Activated T-helper 1 cell treated with anti-CD3 and anti-CD28 coated beads, Interleukin-12 subunit alpha, Interleukin-12 subunit beta, Interleukin-2, Interleukin-4 antibody, amounts not matched to agents 30 ng/mL and 10 ng/mL and 1 ng/mL, durations not matched to agents 14 hours and 24 hours and 36 hours (primary cell): ENCODE measurements at regions of chr7 and their contacts with region 1.

Region 1: GRCh38 chr7:137934941-137935883 is 66.7 kb downstream of the CREB3L2 start:
- DNase-seq: no peak
- H3K4me3 Mint-ChIP-seq: peak overlapping the region; percentile 81
- H3K27ac Mint-ChIP-seq: peak overlapping the region; percentile 89
- H3K4me1 Mint-ChIP-seq: peaks cover 40% of the 10 kb centered on the region
- H3K27me3 Mint-ChIP-seq: no peaks in the 10 kb centered on the region

Region 2: DNA sequence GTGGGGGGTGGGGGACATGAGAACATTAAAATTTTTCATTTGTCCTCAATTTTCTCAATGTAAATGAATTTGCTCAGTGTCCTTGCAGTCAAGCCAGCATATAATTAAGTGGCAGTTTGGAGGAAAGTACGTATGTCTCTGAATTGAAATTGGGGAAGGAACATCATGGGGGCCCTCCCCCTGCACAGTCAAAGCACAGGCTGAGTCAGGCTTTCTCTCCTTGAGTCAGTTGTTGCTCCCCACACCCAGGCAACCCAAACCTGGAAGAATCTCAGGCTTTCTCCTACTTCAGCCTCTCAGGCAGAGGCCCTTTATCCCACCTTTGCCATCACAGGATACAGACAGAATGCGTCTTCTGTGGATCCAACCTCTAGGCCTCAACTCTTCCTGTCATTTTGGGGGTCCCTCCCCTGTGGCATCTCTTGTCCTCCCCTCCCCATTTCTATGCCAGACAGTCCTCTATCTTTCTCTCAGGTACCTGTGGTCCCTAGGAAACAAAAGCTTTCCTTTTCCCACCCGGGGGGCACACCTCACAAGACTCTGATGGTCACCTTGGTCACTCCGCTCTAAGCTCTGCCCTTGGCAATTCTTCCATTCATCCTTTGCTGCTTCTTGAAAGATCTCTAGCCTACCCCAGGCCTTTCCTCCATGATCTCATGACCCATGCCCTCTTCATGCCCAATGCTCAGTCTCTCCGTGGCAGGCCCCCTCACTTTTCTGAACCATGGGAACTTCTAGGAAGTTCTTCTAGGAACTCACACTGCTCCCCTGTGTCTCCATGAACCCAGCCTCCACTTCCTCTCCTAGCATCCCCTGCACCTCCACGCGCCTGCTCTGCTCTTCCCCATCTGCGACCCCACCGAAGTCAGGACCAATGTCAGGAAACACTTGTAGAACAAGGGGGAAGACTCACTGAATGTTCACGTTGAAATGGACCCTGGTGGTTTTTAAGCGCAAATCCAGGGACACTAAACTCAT is 26.3 kb after region 1 on chr7:
- intact Hi-C with region 1: loop called (anchors 1 kb)
- DNase-seq: no peak
- H3K4me3 Mint-ChIP-seq: no peak overlapping the region
- H3K27ac Mint-ChIP-seq: peak overlapping the region; percentile 5
- H3K4me1 Mint-ChIP-seq: peaks cover 42% of the 10 kb centered on the region
- H3K27me3 Mint-ChIP-seq: no peaks in the 10 kb centered on the region

Region 3: DNA sequence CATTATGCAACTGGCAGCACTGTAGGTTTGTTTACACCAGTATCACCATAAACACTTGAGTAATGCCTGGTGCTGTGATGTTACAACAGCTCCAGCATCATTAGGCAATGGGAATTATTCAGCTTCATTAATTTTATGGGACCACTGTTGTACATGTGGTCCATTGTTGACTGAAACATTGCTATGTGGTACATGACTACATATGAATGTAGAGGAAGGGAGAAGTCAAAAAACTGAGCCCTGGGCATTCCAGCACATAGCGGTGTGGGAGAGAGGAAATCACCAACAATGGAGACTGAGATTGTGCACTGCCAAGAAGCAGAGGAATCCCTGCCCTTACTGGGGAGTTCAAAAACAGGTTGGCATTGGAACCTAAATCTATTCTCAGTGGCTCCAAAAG is 613.9 kb after region 1 on chr7:
- intact Hi-C with region 1: no loop called
- DNase-seq: no peak
- H3K4me3 Mint-ChIP-seq: no peak overlapping the region
- H3K27ac Mint-ChIP-seq: no peak overlapping the region
- H3K4me1 Mint-ChIP-seq: peaks cover 10% of the 10 kb centered on the region
- H3K27me3 Mint-ChIP-seq: no peaks in the 10 kb centered on the region

Region 4: GRCh38 chr7:138608275-138608674 is 673.1 kb after region 1 on chr7:
- intact Hi-C with region 1: no loop called
- DNase-seq: no peak
- H3K4me3 Mint-ChIP-seq: no peak overlapping the region
- H3K27ac Mint-ChIP-seq: no peak overlapping the region
- H3K4me1 Mint-ChIP-seq: peaks cover 17% of the 10 kb centered on the region
- H3K27me3 Mint-ChIP-seq: no peaks in the 10 kb centered on the region

Region 5: DNA sequence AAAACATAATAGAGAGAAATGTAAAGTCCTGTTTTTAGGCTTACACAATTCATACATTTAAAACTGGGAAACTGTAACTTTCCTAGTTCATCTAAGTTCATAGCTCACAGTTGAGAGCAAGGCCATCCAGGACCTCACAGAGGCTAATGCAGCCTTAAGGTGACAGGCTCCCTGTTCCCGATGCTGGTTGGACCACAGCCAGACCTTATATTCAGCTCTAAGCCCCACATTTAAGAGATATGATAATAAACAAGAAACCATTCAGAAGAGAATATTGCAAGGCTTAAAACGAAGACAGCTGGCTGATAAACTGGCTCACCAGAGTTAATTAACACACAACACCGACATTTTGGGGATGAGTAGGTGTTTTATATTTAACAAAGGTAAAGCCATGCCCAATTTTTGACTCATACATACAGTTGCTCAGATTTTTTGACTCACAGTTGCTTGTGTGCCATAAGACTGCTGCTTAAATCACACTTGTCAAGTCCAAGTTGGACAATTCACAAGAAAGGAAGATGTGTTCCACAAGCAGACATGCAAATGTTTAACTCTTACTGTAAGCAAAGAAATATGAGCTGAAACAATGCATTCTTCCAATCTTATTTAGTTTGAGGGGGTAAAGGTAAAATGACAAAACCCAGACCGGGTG is 821.5 kb after region 1 on chr7:
- intact Hi-C with region 1: no loop called
- DNase-seq: no peak
- H3K4me3 Mint-ChIP-seq: no peak overlapping the region
- H3K27ac Mint-ChIP-seq: no peak overlapping the region
- H3K4me1 Mint-ChIP-seq: peaks cover 49% of the 10 kb centered on the region
- H3K27me3 Mint-ChIP-seq: no peaks in the 10 kb centered on the region